Ascending aorta (tissue), 2 donors: ENCODE measurements at regions of chr3 and their contacts with region 1.

Region 1: GRCh38 chr3:64651741-64652241 is 36.0 kb downstream of the ADAMTS9 start:
- DNase-seq: no peak
- H3K4me3 ChIP-seq: no peak overlapping the region
- H3K27ac ChIP-seq: no peak overlapping the region
- H3K4me1 ChIP-seq: peaks cover 0 to 16% of the 10 kb centered on the region in 2 donors
- H3K27me3 ChIP-seq: no peaks in the 10 kb centered on the region
- CTCF ChIP-seq: no peak

Region 2: GRCh38 chr3:65245133-65246063 is 593.6 kb after region 1 on chr3:
- intact Hi-C with region 1: loop called (anchors 10 kb)
- DNase-seq: no peak
- H3K4me3 ChIP-seq: no peak overlapping the region
- H3K27ac ChIP-seq: no peak overlapping the region
- H3K4me1 ChIP-seq: no peaks in the 10 kb centered on the region
- H3K27me3 ChIP-seq: no peaks in the 10 kb centered on the region
- CTCF ChIP-seq: peak in 2 of 3 experiments; percentile 42 to 63